BJ (cell line): ENCODE measurements at regions of chr1 and their contacts with region 1.

Region 1: DNA sequence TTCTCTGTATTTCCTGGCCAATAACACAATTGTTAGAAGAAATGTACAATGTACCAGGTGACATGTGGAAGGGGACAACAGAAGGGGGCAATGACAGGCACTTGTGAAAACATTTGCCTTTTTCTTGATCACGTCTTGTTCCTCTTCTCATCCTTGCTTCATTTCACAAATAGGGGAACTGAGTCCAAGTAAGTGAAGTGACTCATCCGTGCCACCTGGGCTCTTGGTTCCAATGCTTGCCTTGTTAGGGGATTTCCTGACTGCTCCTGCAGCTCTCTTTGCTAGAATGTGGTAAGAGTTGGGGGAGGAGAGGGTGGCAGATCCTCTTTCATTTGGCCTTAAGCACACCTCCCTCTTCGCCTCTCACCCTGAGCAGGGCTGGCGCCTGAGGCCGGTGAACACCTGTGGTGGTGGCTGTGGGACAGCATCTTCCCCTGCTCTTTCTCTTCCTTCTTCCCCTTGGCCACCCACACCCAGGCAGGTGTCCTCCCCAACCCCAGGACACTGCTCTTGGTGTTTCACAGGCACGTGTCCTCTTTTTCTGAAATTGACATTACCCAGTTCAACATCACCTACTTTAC is 2.2 kb upstream of the RHEX start:
- DNase-seq: no peak
- H3K4me3 ChIP-seq: no peak overlapping the region
- H3K27me3 ChIP-seq: peaks cover 10% of the 10 kb centered on the region
- CTCF ChIP-seq: no peak

Region 2: GRCh38 chr1:205878026-205878425 is 172.7 kb before region 1 on chr1:
- CTCF ChIA-PET with region 1: no interaction called
- POLR2A ChIA-PET with region 1: no interaction called
- DNase-seq: no peak
- H3K4me3 ChIP-seq: no peak overlapping the region
- H3K27me3 ChIP-seq: no peaks in the 10 kb centered on the region
- CTCF ChIP-seq: no peak

Region 3: GRCh38 chr1:206030714-206031113 is 20.0 kb before region 1 on chr1:
- CTCF ChIA-PET with region 1: interaction called, 15 read pairs
- POLR2A ChIA-PET with region 1: no interaction called
- DNase-seq: no peak
- H3K4me3 ChIP-seq: no peak overlapping the region
- H3K27me3 ChIP-seq: peaks cover 14% of the 10 kb centered on the region
- CTCF ChIP-seq: peak; percentile 94

Region 4: DNA sequence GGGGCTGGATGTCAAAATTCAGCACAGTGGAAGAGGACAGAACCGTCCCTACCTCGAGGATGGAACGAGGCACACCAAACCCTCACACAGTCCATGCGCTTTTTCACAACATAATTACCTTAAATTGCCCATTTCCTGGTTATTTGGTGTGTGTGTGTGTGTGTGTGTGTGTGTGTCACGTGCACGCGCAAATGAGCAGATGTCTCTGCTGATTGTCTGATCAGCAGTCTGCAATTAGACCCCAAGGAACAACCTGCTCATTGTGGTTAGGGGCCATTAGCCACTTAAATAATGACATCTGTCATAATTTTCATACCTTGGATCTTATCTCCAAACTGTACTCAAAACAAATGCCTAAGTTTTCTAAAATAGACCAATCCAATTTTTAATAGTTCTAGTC is 43.3 kb after region 1 on chr1:
- CTCF ChIA-PET with region 1: no interaction called
- POLR2A ChIA-PET with region 1: no interaction called
- DNase-seq: no peak
- H3K4me3 ChIP-seq: no peak overlapping the region
- H3K27me3 ChIP-seq: peaks cover 16% of the 10 kb centered on the region
- CTCF ChIP-seq: no peak